CD4-positive, alpha-beta memory T cell (primary cell): ENCODE measurements at regions of chr16 and their contacts with region 1.

Region 1: GRCh38 chr16:982145-983043 is 824 bp downstream of the SOX8 start:
- DNase-seq: peak in 3 of 5 donors; percentile 33 to 40 (median 34)
- H3K4me3 ChIP-seq: peak overlapping the region in 1 of 2 donors; percentile 19
- H3K4me3 Mint-ChIP-seq: peak overlapping the region; percentile 48 to 73 (median 62)
- H3K27ac ChIP-seq: no peak overlapping the region
- H3K27ac Mint-ChIP-seq: peak overlapping the region in 3 of 7 donors; percentile 47 to 65 (median 57)
- H3K4me1 ChIP-seq: peaks cover 12% of the 10 kb centered on the region
- H3K4me1 Mint-ChIP-seq: peaks cover 6 to 8% (median 7%) of the 10 kb centered on the region in 4 donors
- H3K27me3 ChIP-seq: no peaks in the 10 kb centered on the region
- H3K27me3 Mint-ChIP-seq: peaks cover 0 to 4% of the 10 kb centered on the region in 2 donors

Region 2: DNA sequence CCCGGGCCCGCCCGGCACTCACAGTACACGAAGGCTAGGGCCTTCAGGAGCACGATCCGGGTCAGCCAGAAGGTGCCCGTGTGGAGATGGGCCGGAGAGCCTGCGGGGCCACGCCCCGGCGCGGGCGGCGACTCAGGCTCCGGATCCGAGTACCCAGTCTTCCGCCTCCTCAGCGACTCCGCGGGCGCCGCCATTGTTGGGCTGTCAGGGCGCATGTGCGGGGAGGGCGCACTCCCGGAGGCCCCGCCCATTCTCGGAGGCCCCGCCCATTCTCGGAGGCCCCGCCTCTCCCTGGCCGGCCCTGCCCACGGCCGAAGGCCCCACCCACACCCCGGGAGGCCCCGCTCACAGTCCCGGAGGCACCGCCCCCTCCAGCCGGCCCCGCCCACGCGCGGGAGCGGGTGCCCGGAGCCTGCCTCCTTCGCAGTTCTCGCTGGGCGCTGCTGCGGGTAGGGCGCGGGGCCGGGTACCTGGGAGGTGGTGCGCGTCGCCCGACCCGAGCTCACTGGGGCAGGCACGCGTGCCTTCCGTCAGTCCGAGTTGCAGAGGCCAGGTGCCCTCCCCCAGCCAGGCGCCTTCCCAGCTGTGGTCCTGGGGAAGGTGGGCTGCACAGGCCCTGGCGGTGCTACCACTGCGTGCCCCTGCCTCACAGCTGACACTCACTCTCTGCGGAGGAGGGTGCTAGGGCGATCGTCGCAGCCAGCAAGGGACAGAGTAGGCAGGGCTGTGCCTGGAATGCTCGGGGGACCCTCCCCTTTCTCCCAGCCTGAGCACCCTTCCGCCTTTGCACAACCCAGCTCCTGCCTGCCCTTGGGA is 11.4 kb before region 1 on chr16 and contains the start of gene LMF1:
- CTCF ChIA-PET with region 1: no interaction called
- POLR2A ChIA-PET with region 1: interaction called, 120 read pairs
- intact Hi-C with region 1: loop called (anchors 1 kb)
- DNase-seq: peak; percentile 92 to 100 (median 93)
- H3K4me3 ChIP-seq: peak within 1 kb of the TSS; percentile 23 to 82
- H3K4me3 Mint-ChIP-seq: peak within 1 kb of the TSS; percentile 67 to 90 (median 76)
- H3K27ac ChIP-seq: peak within 1 kb of the TSS; percentile 81
- H3K27ac Mint-ChIP-seq: peak within 1 kb of the TSS; percentile 28 to 89 (median 71)
- H3K4me1 ChIP-seq: peaks cover 16% of the 10 kb centered on the region
- H3K4me1 Mint-ChIP-seq: peaks cover 12 to 30% (median 21%) of the 10 kb centered on the region in 4 donors
- H3K27me3 ChIP-seq: no peaks in the 10 kb centered on the region
- H3K27me3 Mint-ChIP-seq: no peaks in the 10 kb centered on the region
- total RNA-seq, gene LMF1: 50.0 to 59.7 TPM